ENCODE measurements at regions of chr20 and their contacts with region 1.

Region 1: GRCh38 chr20:11248687-11249194 is 574.9 kb upstream of the JAG1 start:
- DNase-seq: no peak
- H3K4me3 ChIP-seq: no peak overlapping the region
- H3K27ac ChIP-seq: no peak overlapping the region
- H3K4me1 ChIP-seq: no peaks in the 10 kb centered on the region
- H3K27me3 ChIP-seq: no peaks in the 10 kb centered on the region
- CTCF ChIP-seq: no peak

Region 2: GRCh38 chr20:9660236-9660868 is 1588.4 kb before region 1 on chr20:
- CTCF ChIA-PET with region 1: no interaction called
- POLR2A ChIA-PET with region 1: interaction called, 14 read pairs
- intact Hi-C with region 1: no loop called
- DNase-seq: peak in 1 of 2 experiments; percentile 12
- H3K4me3 ChIP-seq: no peak overlapping the region
- H3K27ac ChIP-seq: no peak overlapping the region
- H3K4me1 ChIP-seq: no peaks in the 10 kb centered on the region
- H3K27me3 ChIP-seq: no peaks in the 10 kb centered on the region
- CTCF ChIP-seq: no peak

Region 3: DNA sequence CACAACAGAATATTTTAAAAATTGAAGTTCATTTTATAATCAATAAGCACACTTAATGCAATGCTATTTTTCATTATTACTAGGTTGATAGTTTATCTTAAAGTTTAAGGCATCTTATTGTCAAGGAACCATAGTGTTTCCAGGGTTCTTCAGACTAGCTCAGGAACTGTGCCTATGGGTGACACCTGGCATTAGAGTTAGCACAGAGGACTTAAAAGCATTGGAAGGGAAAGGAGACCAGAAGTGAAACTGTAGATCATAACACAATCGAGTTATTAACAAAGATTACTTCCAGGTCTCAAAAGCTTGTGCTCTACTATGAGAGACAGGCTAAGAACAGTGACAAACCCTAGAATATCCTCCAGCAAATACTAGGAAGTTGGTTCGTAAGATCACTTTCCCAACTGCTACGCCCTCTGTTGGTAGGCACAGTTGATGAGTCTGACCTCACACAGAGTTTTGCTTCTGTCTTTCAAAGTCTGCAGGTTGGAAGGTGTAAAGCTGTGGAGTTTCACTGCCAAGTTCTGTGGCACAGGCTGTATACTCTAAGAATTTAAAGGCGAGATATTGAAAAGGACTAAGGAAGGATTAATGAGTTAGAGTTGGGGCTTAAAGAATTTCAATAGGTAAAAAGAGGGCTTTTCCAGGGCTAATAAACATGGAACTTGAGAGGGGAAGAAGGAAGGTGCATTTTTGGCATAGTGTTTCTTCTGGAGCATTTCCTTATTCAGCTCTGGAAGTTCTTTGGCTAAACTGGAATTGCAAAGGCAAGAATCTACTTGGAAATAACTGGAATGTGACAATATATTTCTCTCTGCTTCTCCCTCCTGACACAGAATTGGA is 43.6 kb before region 1 on chr20:
- CTCF ChIA-PET with region 1: no interaction called
- POLR2A ChIA-PET with region 1: no interaction called
- intact Hi-C with region 1: no loop called
- DNase-seq: peak in 1 of 2 experiments; percentile 54
- H3K4me3 ChIP-seq: no peak overlapping the region
- H3K27ac ChIP-seq: no peak overlapping the region
- H3K4me1 ChIP-seq: peaks cover 7% of the 10 kb centered on the region; the same call in 1 of the 2 replicates
- H3K27me3 ChIP-seq: no peaks in the 10 kb centered on the region
- CTCF ChIP-seq: peak; percentile 68

Measured in PC-9 (cell line).